Activated CD8-positive, alpha-beta T cell treated with anti-CD3 and anti-CD28 coated beads for 36 hours (primary cell): ENCODE measurements at regions of chr1 and their contacts with region 1.

Region 1: GRCh38 chr1:241611063-241611462 is 29.1 kb downstream of the CHML start:
- DNase-seq: no peak
- ATAC-seq: peak; percentile 87
- H3K4me3 Mint-ChIP-seq: no peak overlapping the region
- H3K27ac Mint-ChIP-seq: no peak overlapping the region
- H3K4me1 Mint-ChIP-seq: peaks cover 13% of the 10 kb centered on the region
- H3K27me3 Mint-ChIP-seq: no peaks in the 10 kb centered on the region
- CTCF ChIP-seq: peak; percentile 81

Region 2: DNA sequence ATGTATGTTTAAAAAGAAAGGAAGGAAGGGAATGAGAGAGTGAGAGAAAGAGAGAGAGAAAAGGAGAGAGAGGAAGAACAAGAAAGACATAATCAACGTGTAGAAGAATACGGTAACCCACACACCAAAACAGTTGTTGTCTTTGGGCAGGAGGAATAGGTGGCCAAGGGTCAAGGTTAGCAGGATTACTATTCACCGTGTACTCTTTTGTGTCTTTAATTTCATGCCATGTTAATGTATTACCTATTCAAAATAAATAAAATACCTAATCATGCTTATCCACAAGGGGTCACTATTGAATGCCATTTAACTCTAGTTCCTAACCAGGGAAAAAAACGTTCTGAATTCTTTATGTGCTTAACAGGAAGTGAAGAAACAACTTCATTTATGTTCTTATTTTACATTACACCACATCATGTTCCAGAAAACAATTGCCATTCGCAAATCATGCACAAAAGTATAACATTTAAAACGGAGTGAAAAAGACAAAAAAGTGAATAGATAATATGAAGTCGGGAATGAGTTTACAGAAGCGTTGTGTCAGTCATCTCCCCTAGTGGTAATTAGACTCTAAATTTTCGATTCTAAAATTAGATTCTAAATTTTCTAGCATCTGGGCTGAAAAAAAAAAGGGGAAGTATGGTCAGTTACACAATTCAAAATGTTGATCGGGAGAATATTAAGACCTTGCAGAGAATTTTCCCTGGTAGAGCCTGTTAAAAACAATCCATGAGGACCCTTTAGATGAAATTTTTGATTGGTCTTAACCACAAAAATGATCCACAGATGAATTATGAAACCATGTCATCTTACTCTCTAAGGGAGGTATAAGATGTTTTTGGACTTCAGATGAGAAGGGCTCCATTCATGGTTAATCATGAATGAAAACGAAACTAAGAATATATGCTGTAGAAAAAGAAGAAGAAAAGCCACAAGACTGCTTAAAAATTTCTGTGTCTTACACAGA is 79.6 kb before region 1 on chr1:
- CTCF ChIA-PET with region 1: interaction called, 15 read pairs
- POLR2A ChIA-PET with region 1: no interaction called
- intact Hi-C with region 1: loop called (anchors 5 kb)
- DNase-seq: no peak
- ATAC-seq: peak; percentile 83
- H3K4me3 Mint-ChIP-seq: peak overlapping the region; percentile 77
- H3K27ac Mint-ChIP-seq: peak overlapping the region; percentile 95
- H3K4me1 Mint-ChIP-seq: peaks cover 19% of the 10 kb centered on the region
- H3K27me3 Mint-ChIP-seq: peaks cover 4% of the 10 kb centered on the region
- CTCF ChIP-seq: peak; percentile 79

Region 3: GRCh38 chr1:241574154-241574553 is 36.9 kb before region 1 on chr1:
- CTCF ChIA-PET with region 1: no interaction called
- POLR2A ChIA-PET with region 1: no interaction called
- intact Hi-C with region 1: no loop called
- DNase-seq: no peak
- ATAC-seq: no peak
- H3K4me3 Mint-ChIP-seq: no peak overlapping the region
- H3K27ac Mint-ChIP-seq: no peak overlapping the region
- H3K4me1 Mint-ChIP-seq: no peaks in the 10 kb centered on the region
- H3K27me3 Mint-ChIP-seq: peaks cover 21% of the 10 kb centered on the region
- CTCF ChIP-seq: no peak

Region 4: DNA sequence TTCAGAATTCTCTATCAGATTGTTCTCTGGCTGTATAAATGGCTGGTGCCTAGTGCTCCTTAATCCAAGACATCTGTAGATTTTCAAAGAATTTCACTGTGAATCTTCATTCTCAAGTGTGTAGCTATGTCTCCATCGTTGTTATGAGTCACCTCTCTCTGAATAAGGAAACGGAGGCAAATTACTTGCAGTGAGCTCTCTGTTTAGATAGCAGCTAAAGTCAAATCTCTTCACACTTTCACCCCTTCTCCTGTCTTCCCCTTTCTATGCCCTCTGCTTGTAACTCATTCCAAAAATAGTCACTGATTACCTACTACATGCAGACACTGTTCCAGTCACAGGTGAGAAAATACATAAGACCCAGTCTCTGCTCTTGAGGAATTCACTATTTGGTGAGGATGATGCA is 10.6 kb before region 1 on chr1:
- CTCF ChIA-PET with region 1: interaction called, 14 read pairs
- POLR2A ChIA-PET with region 1: interaction called, 3 read pairs
- intact Hi-C with region 1: no loop called
- DNase-seq: no peak
- ATAC-seq: no peak
- H3K4me3 Mint-ChIP-seq: no peak overlapping the region
- H3K27ac Mint-ChIP-seq: no peak overlapping the region
- H3K4me1 Mint-ChIP-seq: peaks cover 4% of the 10 kb centered on the region
- H3K27me3 Mint-ChIP-seq: no peaks in the 10 kb centered on the region
- CTCF ChIP-seq: no peak

Region 5: DNA sequence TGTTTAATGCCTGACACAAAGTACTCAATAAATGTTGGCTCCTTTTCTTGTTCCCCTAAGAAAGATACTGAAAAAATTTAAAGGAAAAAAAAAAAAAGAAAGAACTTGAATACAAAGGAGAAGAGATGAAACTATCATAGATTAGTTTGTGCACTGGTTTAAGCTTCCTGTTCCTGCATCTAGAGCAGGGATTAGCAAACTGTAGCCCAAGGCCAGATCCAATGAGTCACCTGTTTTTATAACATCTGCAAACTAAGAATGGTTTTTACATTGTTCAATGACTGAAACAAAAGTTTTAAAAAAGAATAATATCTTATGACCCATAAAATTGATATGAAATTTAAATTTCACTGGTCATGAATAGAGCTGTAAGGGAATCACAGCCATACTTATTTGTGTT is 91.4 kb after region 1 on chr1:
- CTCF ChIA-PET with region 1: no interaction called
- POLR2A ChIA-PET with region 1: no interaction called
- intact Hi-C with region 1: no loop called
- DNase-seq: no peak
- ATAC-seq: no peak
- H3K4me3 Mint-ChIP-seq: no peak overlapping the region
- H3K27ac Mint-ChIP-seq: no peak overlapping the region
- H3K4me1 Mint-ChIP-seq: peaks cover 16% of the 10 kb centered on the region
- H3K27me3 Mint-ChIP-seq: no peaks in the 10 kb centered on the region
- CTCF ChIP-seq: no peak

Region 6: GRCh38 chr1:241834733-241835377 is 223.8 kb after region 1 on chr1:
- CTCF ChIA-PET with region 1: interaction called, 5 read pairs
- POLR2A ChIA-PET with region 1: no interaction called
- intact Hi-C with region 1: loop called (anchors 5 kb)
- DNase-seq: no peak
- ATAC-seq: no peak
- H3K4me3 Mint-ChIP-seq: no peak overlapping the region
- H3K27ac Mint-ChIP-seq: no peak overlapping the region
- H3K4me1 Mint-ChIP-seq: peaks cover 10% of the 10 kb centered on the region
- H3K27me3 Mint-ChIP-seq: peaks cover 4% of the 10 kb centered on the region
- CTCF ChIP-seq: peak; percentile 59

Region 7: DNA sequence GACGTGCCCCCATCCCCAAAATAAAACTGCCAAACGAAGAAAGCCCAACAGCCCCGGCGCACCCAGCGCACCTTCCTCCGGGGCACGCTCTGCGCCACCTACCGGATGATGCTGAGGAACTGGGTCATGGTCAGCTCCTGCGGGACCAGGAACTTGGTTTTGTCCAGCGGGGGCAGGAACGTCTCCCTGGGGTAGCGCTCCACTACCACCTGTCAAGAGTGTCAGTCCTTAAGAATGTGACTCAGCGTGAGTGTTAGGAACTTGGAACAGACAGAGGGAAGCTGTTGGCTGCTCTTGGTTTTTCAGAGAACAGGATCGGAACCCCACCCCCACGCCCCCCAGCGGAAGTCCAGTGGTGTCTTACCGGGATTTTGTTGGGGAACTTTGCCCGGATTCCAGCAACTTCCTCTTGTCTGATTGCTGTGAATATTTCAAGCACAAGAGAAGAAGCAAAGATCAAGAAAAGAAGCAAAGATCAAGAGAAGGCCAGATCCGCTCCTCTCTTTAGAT is 387.4 kb after region 1 on chr1:
- CTCF ChIA-PET with region 1: interaction called, 27 read pairs
- POLR2A ChIA-PET with region 1: no interaction called
- intact Hi-C with region 1: loop called (anchors 10 kb)
- DNase-seq: peak; percentile 63
- ATAC-seq: peak; percentile 74
- H3K4me3 Mint-ChIP-seq: peak overlapping the region; percentile 24
- H3K27ac Mint-ChIP-seq: no peak overlapping the region
- H3K4me1 Mint-ChIP-seq: peaks cover 4% of the 10 kb centered on the region
- H3K27me3 Mint-ChIP-seq: peaks cover 5% of the 10 kb centered on the region
- CTCF ChIP-seq: peak; percentile 80